HEK293 (cell line): ENCODE measurements at regions of chr9 and their contacts with region 1.

Region 1: DNA sequence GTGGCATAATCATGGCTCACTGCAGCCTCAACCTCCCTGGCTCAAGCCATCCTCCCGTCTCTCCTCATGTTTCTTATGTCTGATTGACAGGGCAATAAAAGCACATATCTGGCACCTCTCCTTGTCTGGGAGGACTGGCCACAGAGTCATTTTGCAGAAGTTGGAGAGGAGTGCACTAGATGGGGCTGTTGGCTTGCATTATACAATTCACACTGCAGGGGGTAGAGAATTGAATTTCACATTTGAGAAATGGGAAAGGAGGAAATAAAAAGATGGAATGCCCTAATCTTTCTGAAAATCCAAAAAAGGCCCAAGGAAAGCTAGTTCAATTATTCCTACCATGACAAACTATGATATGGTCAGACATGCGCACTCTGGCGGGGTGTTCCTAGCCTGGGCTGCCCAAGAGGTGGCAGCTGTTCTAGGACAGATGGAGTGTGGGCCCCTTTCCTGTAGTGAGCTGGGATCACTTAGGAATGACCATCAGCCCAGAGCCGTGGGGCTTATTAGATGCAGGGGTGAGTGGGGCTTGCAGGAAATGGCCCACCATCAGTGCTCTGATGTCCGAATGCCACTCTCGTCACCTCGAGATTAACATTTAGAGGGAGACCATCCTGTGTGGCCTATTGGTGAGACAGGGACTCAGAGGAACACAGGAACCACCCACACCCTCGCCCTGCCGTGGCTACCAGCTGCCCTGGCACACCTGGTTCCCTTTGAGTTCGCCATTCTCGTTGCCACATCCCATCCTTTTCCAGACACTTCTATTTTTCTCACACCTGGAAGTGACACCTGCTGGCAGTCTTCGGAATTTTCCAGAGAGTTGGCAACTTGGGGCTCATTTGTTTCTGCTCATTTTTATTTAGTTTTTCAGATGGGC is 21.8 kb upstream of the ANKRD18A start:
- H3K4me3 ChIP-seq: no peak overlapping the region
- H3K27ac ChIP-seq: no peak overlapping the region
- H3K4me1 ChIP-seq: 0 out of 2 replicates have a peak, but pooled peaks cover 2% of the 10 kb centered on the region
- CTCF ChIP-seq: 0 out of 2 replicates have a peak, but pooled peaks have one; percentile 39

Region 2: GRCh38 chr9:38141746-38142591 is 500.3 kb before region 1 on chr9:
- CTCF ChIA-PET with region 1: no interaction called
- POLR2A ChIA-PET with region 1: no interaction called
- H3K4me3 ChIP-seq: no peak overlapping the region
- H3K27ac ChIP-seq: no peak overlapping the region
- H3K4me1 ChIP-seq: peaks cover 3% of the 10 kb centered on the region; the same call in 1 of the 2 replicates
- CTCF ChIP-seq: no peak

Region 3: DNA sequence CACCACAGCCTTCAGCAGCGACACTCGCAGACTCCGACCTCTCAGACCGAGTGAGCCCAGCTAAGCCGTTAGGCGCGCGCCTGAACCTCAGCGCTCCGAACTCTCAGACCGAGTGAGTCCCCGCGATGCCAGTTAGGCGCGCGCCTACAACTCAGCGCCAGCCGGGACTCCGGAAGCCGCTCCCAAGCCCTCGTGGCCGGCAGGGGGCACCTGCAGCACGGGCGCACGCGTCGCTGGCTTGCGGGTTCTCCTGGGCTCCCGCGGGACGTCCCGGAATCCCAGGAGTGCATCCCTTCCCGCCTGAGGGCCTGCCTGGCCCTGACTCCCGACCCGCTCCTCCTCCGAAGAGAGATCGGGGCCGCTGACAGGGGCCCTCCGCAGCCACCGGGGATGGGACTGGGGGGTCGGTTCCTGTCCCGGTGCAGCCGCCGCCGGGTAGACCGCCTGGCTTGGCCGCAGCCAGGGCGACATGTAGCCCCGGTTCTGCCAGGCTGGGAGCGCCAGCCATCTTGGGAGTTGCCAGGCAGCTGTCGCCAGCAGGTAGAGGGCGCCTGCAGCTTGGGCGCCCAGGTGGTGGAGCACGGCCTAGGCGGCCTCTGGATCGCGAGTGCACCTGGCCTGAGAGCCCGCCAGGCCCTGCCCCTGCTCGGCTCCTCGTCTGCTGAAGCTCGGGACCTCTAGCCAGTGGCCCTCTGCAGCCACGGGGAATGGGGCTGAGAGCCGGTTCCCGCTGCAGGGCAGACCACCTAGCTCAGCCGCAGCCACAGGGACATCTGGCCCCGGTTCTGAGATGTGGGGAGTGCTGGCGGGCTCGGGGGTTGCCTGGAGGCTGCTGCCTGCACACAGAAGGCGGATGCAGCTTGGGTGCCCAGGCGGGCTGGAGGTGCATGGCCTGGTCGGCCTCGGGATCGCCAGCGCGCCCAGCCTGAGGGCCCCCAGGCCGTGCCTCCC is 21.5 kb before region 1 on chr9 and contains the start of gene ANKRD18A:
- CTCF ChIA-PET with region 1: interaction called, 12 read pairs
- POLR2A ChIA-PET with region 1: interaction called, 5 read pairs
- H3K4me3 ChIP-seq: peak within 1 kb of the TSS; percentile 66
- H3K27ac ChIP-seq: peak within 1 kb of the TSS; percentile 96
- H3K4me1 ChIP-seq: no peaks in the 10 kb centered on the region
- CTCF ChIP-seq: peak; percentile 87

Region 4: GRCh38 chr9:38662763-38663593 is 20.8 kb after region 1 on chr9:
- CTCF ChIA-PET with region 1: interaction called, 11 read pairs
- POLR2A ChIA-PET with region 1: no interaction called
- H3K4me3 ChIP-seq: no peak overlapping the region
- H3K27ac ChIP-seq: no peak overlapping the region
- H3K4me1 ChIP-seq: no peaks in the 10 kb centered on the region
- CTCF ChIP-seq: no peak

Region 5: GRCh38 chr9:38671748-38672147 is 29.5 kb after region 1 on chr9:
- CTCF ChIA-PET with region 1: interaction called, 12 read pairs
- POLR2A ChIA-PET with region 1: no interaction called
- H3K4me3 ChIP-seq: no peak overlapping the region
- H3K27ac ChIP-seq: peak overlapping the region; percentile 11; the same call in 1 of the 2 replicates
- H3K4me1 ChIP-seq: peaks cover 3% of the 10 kb centered on the region; the same call in 1 of the 2 replicates
- CTCF ChIP-seq: no peak

Region 6: GRCh38 chr9:38707885-38708637 is 65.8 kb after region 1 on chr9:
- CTCF ChIA-PET with region 1: interaction called, 56 read pairs
- POLR2A ChIA-PET with region 1: no interaction called
- H3K4me3 ChIP-seq: no peak overlapping the region
- H3K27ac ChIP-seq: no peak overlapping the region
- H3K4me1 ChIP-seq: no peaks in the 10 kb centered on the region
- CTCF ChIP-seq: no peak